ENCODE measurements at regions of chr11 and their contacts with region 1.

Region 1: GRCh38 chr11:65329944-65330403 is 3.7 kb upstream of the DPF2 start:
- DNase-seq: peak; percentile 92
- ATAC-seq: no peak
- H3K4me3 Mint-ChIP-seq: no peak overlapping the region
- H3K27ac Mint-ChIP-seq: no peak overlapping the region
- H3K4me1 Mint-ChIP-seq: peaks cover 16% of the 10 kb centered on the region
- H3K27me3 Mint-ChIP-seq: peaks cover 4% of the 10 kb centered on the region

Region 2: DNA sequence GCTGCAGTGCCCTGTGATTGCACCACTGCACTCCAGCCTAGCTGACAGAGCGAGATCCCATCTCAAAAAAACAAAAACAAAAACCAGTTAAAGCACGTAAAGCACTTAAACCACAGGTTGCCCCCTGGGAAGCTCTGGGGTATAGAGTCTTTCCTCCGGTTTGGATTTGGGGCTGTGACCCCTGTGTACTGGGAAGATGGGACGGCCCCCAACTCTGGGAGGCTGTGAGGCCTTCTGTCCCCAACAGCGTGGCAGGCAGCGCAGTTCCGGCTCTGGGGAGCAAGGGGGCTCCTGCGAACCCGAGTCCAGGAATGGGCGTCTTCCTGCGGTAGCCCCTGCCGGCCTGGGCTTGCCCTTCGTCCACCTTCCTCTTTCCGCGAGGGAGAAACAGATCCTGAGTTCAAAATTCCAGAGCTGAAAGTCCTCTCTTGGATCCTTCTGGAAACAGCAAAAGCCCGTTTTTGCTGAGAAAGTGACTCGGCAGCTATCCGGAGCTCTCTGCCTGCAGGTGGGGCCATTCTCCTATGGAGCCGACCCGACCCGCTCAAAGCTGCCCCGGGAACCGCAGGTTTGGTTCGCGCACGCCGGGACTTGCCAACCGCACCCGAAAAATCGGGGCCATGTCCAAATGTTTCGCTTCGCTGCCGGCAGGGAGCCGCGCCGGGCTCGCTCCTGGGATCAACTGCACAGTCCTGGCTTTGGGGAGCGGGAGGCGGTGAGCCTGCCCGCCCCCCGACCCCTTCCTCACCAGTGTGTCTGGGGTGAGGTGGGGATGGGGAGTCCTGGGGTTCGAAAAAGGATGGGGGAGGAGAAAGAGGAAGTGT is 104.5 kb before region 1 on chr11:
- CTCF ChIA-PET with region 1: interaction called, 52 read pairs
- POLR2A ChIA-PET with region 1: no interaction called
- DNase-seq: peak; percentile 67
- ATAC-seq: peak; percentile 86
- H3K4me3 Mint-ChIP-seq: peak overlapping the region; percentile 72
- H3K27ac Mint-ChIP-seq: no peak overlapping the region
- H3K4me1 Mint-ChIP-seq: peaks cover 27% of the 10 kb centered on the region
- H3K27me3 Mint-ChIP-seq: peaks cover 18% of the 10 kb centered on the region

Region 3: GRCh38 chr11:65274735-65275682 is 55.0 kb before region 1 on chr11:
- CTCF ChIA-PET with region 1: interaction called, 43 read pairs
- POLR2A ChIA-PET with region 1: no interaction called
- DNase-seq: peak; percentile 42
- ATAC-seq: no peak
- H3K4me3 Mint-ChIP-seq: no peak overlapping the region
- H3K27ac Mint-ChIP-seq: no peak overlapping the region
- H3K4me1 Mint-ChIP-seq: peaks cover 12% of the 10 kb centered on the region
- H3K27me3 Mint-ChIP-seq: no peaks in the 10 kb centered on the region

Region 4: DNA sequence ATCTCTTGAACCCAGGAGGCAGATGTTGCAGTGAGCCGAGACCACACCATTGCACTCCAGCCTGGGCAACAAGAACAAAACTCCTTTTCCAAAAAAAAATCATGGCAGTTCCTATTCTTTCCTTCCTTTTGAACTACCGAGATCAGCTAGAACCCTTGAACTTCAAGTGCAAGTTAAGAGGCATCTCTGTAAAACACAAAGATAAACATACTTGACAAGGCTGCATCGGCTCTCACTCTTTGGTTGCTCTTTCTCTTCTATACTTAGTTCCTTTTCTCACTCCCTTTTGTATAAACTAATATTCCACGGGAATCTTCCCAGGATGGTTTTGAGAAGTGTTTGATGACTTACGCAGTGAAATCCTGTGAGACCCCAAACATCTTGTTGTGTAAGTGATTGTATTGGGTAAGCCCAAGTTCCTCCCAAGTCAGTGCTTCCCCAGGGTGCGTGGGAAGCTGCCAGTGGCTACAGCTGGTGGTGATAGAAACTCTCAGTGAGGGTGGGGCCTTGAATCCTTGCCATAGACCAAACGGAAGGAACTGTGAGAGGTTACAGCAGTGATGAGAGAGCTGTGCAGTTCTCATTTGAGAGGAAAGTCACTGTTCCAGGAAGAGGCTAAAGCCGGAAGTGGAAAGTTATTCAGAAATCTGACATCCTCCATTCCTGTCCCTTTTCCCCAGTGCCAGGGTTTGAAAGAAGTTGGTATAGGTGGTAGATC is 39.4 kb before region 1 on chr11:
- CTCF ChIA-PET with region 1: interaction called, 10 read pairs
- POLR2A ChIA-PET with region 1: no interaction called
- DNase-seq: no peak
- ATAC-seq: no peak
- H3K4me3 Mint-ChIP-seq: no peak overlapping the region
- H3K27ac Mint-ChIP-seq: no peak overlapping the region
- H3K4me1 Mint-ChIP-seq: no peaks in the 10 kb centered on the region
- H3K27me3 Mint-ChIP-seq: no peaks in the 10 kb centered on the region

Region 5: GRCh38 chr11:65340226-65340625 is 10.3 kb after region 1 on chr11:
- CTCF ChIA-PET with region 1: interaction called, 12 read pairs
- POLR2A ChIA-PET with region 1: interaction called, 4 read pairs
- DNase-seq: no peak
- ATAC-seq: no peak
- H3K4me3 Mint-ChIP-seq: no peak overlapping the region
- H3K27ac Mint-ChIP-seq: no peak overlapping the region
- H3K4me1 Mint-ChIP-seq: peaks cover 24% of the 10 kb centered on the region
- H3K27me3 Mint-ChIP-seq: no peaks in the 10 kb centered on the region

Region 6: GRCh38 chr11:65352783-65353182 is 22.8 kb after region 1 on chr11:
- CTCF ChIA-PET with region 1: interaction called, 14 read pairs
- POLR2A ChIA-PET with region 1: no interaction called
- DNase-seq: no peak
- ATAC-seq: no peak
- H3K4me3 Mint-ChIP-seq: no peak overlapping the region
- H3K27ac Mint-ChIP-seq: no peak overlapping the region
- H3K4me1 Mint-ChIP-seq: peaks cover 19% of the 10 kb centered on the region
- H3K27me3 Mint-ChIP-seq: no peaks in the 10 kb centered on the region

Region 7: GRCh38 chr11:65588199-65589054 is 258.5 kb after region 1 on chr11:
- CTCF ChIA-PET with region 1: no interaction called
- POLR2A ChIA-PET with region 1: no interaction called
- DNase-seq: peak; percentile 86
- ATAC-seq: peak; percentile 89
- H3K4me3 Mint-ChIP-seq: peak overlapping the region; percentile 55
- H3K27ac Mint-ChIP-seq: peak overlapping the region; percentile 94
- H3K4me1 Mint-ChIP-seq: peaks cover 48% of the 10 kb centered on the region
- H3K27me3 Mint-ChIP-seq: no peaks in the 10 kb centered on the region

Measured in activated CD8-positive, alpha-beta T cell treated with anti-CD3 and anti-CD28 coated beads, Interleukin-2, amount 10 ng/mL, durations not matched to agents 7 days and 5 days (primary cell).